Ovary (tissue), 10 donors: ENCODE measurements at regions of chr7 and their contacts with region 1.

Region 1: GRCh38 chr7:16504016-16504415 is 22.6 kb upstream of the LRRC72 start:
- DNase-seq: no peak
- H3K4me3 ChIP-seq: no peak overlapping the region
- H3K27ac ChIP-seq: no peak overlapping the region
- H3K4me1 ChIP-seq: no peaks in the 10 kb centered on the region
- H3K27me3 ChIP-seq: no peaks in the 10 kb centered on the region
- CTCF ChIP-seq: no peak
- EP300 ChIP-seq: no peak
- POLR2A ChIP-seq: no peak

Region 2: DNA sequence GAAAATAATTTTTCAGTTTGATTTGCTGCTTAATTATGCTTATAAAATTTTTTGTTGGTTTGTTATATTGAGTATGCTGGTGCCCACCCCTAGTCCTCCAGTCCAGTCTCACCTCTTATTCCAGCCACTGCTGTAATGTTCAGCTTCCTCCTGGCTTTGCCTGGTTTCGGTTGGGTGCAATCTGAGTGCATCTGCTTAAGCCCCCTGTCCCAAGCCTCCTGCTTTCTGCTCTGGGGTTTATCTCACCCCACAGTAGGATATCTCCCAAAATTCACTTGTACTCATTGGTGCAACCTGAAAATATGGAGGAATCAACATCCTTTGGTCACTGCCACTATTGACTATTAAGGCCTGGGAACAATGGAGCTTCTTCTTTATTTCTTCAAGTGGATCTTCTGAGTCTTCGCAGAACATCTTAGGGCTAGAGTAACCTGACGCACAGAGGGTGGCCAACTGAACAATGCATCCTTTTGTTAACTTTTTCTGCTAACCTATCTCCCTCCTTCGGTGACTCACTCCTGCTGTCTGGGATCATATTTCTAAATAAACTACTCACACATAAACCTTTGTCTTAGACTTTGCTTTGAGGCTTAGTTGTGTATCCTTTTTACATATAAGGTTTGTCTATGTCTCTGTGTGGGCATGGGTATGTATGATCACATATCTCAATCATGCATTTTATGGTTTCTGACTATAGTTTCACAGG is 19.4 kb before region 1 on chr7:
- intact Hi-C with region 1: loop called in 1 of 4 experiments (anchors 1 kb)
- DNase-seq: no peak
- H3K4me3 ChIP-seq: no peak overlapping the region
- H3K27ac ChIP-seq: no peak overlapping the region
- H3K4me1 ChIP-seq: no peaks in the 10 kb centered on the region
- H3K27me3 ChIP-seq: no peaks in the 10 kb centered on the region
- CTCF ChIP-seq: no peak
- EP300 ChIP-seq: no peak
- POLR2A ChIP-seq: no peak

Region 3: GRCh38 chr7:16753102-16753931 is 249.3 kb after region 1 on chr7 and contains the start of gene TSPAN13:
- intact Hi-C with region 1: no loop called
- DNase-seq: peak; percentile 51 to 76 (median 54)
- H3K4me3 ChIP-seq: peak within 1 kb of the TSS; percentile 43
- H3K27ac ChIP-seq: no peak within 1 kb of the TSS
- H3K4me1 ChIP-seq: peaks cover 4% of the 10 kb centered on the region
- H3K27me3 ChIP-seq: no peaks in the 10 kb centered on the region
- CTCF ChIP-seq: no peak
- EP300 ChIP-seq: no peak
- POLR2A ChIP-seq: no peak
- total RNA-seq, gene TSPAN13: 0.72 to 23.4 (median 3.7) TPM